ENCODE measurements at regions of chr1 and their contacts with region 1.

Region 1: GRCh38 chr1:46616277-46617107 is at the start of gene MOB3C:
- DNase-seq: peak; percentile 75
- H3K4me3 ChIP-seq: peak within 1 kb of the TSS; percentile 79 to 84
- H3K27ac ChIP-seq: peak within 1 kb of the TSS; percentile 89 to 95
- H3K4me1 ChIP-seq: peaks cover 3% of the 10 kb centered on the region
- H3K27me3 ChIP-seq: no peaks in the 10 kb centered on the region
- CTCF ChIP-seq: no peak
- POLR2A ChIP-seq: peak; percentile 79
- total RNA-seq, gene MOB3C: 19.4 to 19.7 TPM

Region 2: GRCh38 chr1:46333300-46334029 is 283.0 kb before region 1 on chr1:
- intact Hi-C with region 1: no loop called
- DNase-seq: no peak
- H3K4me3 ChIP-seq: no peak overlapping the region
- H3K27ac ChIP-seq: no peak overlapping the region
- H3K4me1 ChIP-seq: no peaks in the 10 kb centered on the region
- H3K27me3 ChIP-seq: no peaks in the 10 kb centered on the region
- CTCF ChIP-seq: peak in 1 of 4 experiments; percentile 23
- POLR2A ChIP-seq: no peak

Region 3: GRCh38 chr1:46691997-46692790 is 75.7 kb after region 1 on chr1:
- intact Hi-C with region 1: loop called (anchors 5 kb)
- DNase-seq: no peak
- H3K4me3 ChIP-seq: no peak overlapping the region
- H3K27ac ChIP-seq: no peak overlapping the region
- H3K4me1 ChIP-seq: peaks cover 13% of the 10 kb centered on the region
- H3K27me3 ChIP-seq: no peaks in the 10 kb centered on the region
- CTCF ChIP-seq: no peak
- POLR2A ChIP-seq: no peak

Measured in prostate gland (tissue), 2 donors.